GM10248 (cell line): ENCODE measurements at regions of chr14 and their contacts with region 1.

Region 1: GRCh38 chr14:21437063-21437901 is 18.6 kb downstream of the CHD8 start:
- DNase-seq: peak; percentile 95
- CTCF ChIP-seq: no peak

Region 2: DNA sequence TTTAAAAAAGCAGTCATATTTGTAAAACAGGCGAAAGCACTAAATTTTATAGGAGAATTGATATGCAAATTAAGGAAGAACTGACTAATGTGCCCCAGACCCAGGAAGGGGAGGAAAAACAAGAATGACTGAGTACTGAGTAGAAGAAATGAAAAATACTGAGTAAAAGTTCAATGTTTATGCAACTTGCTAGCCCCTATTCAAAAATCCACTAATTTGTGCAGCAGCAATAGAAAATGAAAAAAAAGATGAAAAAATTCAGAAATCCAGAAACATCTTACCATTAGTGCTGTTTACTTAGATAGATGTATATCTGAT is 12.6 kb after region 1 on chr14:
- CTCF ChIA-PET with region 1: interaction called, 40 read pairs
- POLR2A ChIA-PET with region 1: interaction called, 22 read pairs
- DNase-seq: no peak
- CTCF ChIP-seq: no peak

Region 3: GRCh38 chr14:21455911-21456667 is 18.8 kb after region 1 on chr14 and contains the start of gene CHD8:
- CTCF ChIA-PET with region 1: interaction called, 40 read pairs
- POLR2A ChIA-PET with region 1: interaction called, 22 read pairs
- DNase-seq: peak; percentile 98
- CTCF ChIP-seq: peak; percentile 73

Region 4: GRCh38 chr14:21822109-21822508 is 384.8 kb after region 1 on chr14:
- CTCF ChIA-PET with region 1: no interaction called
- POLR2A ChIA-PET with region 1: no interaction called
- DNase-seq: no peak
- CTCF ChIP-seq: no peak